ENCODE measurements at regions of chr3 and their contacts with region 1.

Region 1: GRCh38 chr3:16048435-16049318 is 125.8 kb upstream of the GALNT15 start:
- DNase-seq: peak; percentile 77
- CTCF ChIP-seq: peak; percentile 60

Region 2: DNA sequence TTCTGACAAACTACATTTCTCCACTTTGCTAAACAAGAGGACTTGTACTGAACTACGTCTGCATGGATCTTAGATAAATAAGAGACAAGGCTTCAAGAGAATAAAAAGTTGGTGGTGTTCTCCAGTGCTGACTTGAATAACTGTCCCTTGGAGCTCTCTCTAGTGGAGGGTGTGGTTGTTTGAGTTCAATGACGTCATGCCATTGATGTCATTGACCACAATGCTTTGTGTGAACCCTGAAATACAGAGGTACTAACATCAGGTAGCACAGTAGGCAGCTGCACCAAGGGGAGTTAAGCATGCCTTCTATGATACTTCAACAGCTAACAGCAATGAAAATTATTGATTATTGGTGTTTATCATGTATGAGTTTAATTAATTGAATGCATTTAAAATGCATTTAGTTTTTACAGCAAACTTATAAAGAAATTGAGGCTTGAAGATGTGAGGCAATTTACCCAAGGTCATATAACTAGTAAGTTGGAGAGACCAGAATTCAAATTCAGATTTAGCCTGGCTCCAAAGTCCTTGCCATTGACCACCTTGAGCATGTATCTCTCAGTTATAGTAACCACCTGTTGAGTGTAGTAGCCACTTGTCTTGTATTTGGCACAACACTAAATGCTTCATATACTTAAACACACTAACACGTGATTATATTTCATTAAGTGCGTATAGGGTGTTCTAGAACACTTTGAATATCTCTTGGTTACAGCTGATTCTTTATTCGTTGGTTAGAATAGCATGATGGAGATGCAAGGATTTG is 124.9 kb before region 1 on chr3:
- CTCF ChIA-PET with region 1: no interaction called
- POLR2A ChIA-PET with region 1: no interaction called
- DNase-seq: peak; percentile 7
- CTCF ChIP-seq: no peak

Region 3: DNA sequence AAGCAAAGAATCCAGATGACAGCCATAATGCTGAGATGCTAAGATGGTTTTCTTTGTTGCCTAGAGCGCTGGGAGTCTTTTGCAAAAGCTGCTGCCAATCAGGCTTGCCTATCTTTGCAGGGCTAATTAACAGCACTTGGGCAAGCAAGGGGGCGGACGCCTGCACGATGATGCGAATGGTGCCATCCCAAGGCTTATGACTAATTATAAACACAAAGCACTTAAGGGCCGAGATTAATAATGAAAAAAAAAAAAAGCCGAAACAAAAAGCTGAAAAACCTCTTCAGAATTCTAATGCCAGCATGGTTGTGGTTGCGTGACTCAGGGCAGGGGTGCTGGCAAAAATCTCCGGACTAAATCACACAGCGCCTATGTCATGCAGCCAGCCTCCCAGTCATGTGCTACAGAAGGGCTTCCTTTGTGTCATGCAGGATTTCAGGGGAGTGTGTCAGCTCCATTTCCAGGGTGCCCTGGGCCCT is 66.0 kb before region 1 on chr3:
- CTCF ChIA-PET with region 1: no interaction called
- POLR2A ChIA-PET with region 1: no interaction called
- DNase-seq: no peak
- CTCF ChIP-seq: no peak

Region 4: GRCh38 chr3:16060358-16060852 is 11.7 kb after region 1 on chr3:
- CTCF ChIA-PET with region 1: interaction called, 46 read pairs
- POLR2A ChIA-PET with region 1: no interaction called
- DNase-seq: no peak
- CTCF ChIP-seq: no peak

Region 5: GRCh38 chr3:16177962-16178627 is 129.4 kb after region 1 on chr3:
- CTCF ChIA-PET with region 1: interaction called, 112 read pairs
- POLR2A ChIA-PET with region 1: no interaction called
- DNase-seq: peak; percentile 81
- CTCF ChIP-seq: peak; percentile 96

Region 6: DNA sequence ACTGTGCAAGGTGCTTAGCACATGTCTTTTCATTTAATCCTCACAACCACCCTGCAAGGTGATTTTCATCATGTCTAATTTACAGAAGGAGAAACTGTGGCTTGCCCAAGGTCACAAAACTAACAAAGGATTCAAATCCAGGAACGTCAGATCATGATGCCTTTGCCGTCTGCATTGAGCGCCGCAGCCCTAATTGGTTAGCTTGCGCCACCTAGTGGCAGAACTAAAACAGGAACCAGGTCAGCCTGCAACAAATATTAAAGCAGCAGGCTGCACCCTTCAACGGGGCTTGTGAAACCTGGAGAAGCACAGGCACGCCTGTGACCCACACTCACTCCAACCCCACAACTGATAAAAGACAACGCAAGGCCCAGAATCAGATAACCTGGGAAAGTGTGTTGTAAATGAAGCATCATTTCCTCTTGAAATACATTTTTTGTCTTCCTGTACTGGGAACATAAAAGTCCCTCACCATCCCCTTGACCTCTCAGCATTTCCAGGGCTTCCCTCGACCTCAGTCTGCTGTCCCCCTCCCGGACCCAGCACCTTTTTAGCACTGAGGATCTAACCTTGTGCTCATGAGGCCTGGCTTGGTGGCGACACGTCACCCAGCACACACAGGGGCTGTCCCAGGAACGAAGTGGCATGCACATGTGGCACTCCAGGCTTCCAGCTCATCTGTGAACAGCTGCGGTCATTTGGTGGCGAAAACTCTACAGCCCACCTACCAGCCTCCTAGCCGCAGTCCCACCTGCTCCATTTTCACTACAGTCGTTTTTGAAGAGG is 198.8 kb after region 1 on chr3:
- CTCF ChIA-PET with region 1: interaction called, 21 read pairs
- POLR2A ChIA-PET with region 1: no interaction called
- DNase-seq: peak; percentile 78
- CTCF ChIP-seq: peak; percentile 94

Region 7: DNA sequence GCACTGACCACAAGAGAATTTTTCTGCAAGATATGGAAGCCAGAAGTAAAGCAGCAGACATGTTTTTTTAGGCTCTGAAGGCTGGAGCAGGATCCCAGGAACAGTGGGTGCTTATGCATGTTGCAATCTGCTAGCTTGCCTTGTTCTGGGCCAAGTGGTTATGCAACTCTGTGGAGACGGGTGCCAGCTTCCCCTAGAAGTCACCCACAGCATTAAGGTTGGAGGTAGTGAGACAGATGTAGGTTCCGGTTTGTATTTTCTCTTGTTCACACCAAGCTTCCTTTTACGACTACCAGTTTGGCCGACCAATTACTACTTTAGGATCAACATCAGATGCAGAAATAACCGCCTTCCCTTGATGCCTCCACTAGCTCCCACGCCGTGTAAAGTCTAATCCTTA is 204.9 kb after region 1 on chr3:
- CTCF ChIA-PET with region 1: interaction called, 21 read pairs
- POLR2A ChIA-PET with region 1: no interaction called
- DNase-seq: no peak
- CTCF ChIP-seq: no peak